ENCODE measurements at regions of chr6 and their contacts with region 1.

Region 1: GRCh38 chr6:87139236-87139635 is 16.1 kb upstream of the ZNF292 start:
- DNase-seq: peak; percentile 65
- H3K4me3 Mint-ChIP-seq: no peak overlapping the region
- H3K27ac Mint-ChIP-seq: no peak overlapping the region
- H3K4me1 Mint-ChIP-seq: peaks cover 6% of the 10 kb centered on the region
- H3K27me3 Mint-ChIP-seq: peaks cover 55% of the 10 kb centered on the region
- CTCF ChIP-seq: peak; percentile 72

Region 2: GRCh38 chr6:86619428-86619827 is 519.8 kb before region 1 on chr6:
- CTCF ChIA-PET with region 1: no interaction called
- POLR2A ChIA-PET with region 1: no interaction called
- intact Hi-C with region 1: no loop called
- DNase-seq: no peak
- H3K4me3 Mint-ChIP-seq: no peak overlapping the region
- H3K27ac Mint-ChIP-seq: no peak overlapping the region
- H3K4me1 Mint-ChIP-seq: no peaks in the 10 kb centered on the region
- H3K27me3 Mint-ChIP-seq: no peaks in the 10 kb centered on the region
- CTCF ChIP-seq: no peak

Region 3: GRCh38 chr6:86871681-86872080 is 267.6 kb before region 1 on chr6:
- CTCF ChIA-PET with region 1: no interaction called
- POLR2A ChIA-PET with region 1: no interaction called
- intact Hi-C with region 1: no loop called
- DNase-seq: no peak
- H3K4me3 Mint-ChIP-seq: no peak overlapping the region
- H3K27ac Mint-ChIP-seq: no peak overlapping the region
- H3K4me1 Mint-ChIP-seq: no peaks in the 10 kb centered on the region
- H3K27me3 Mint-ChIP-seq: no peaks in the 10 kb centered on the region
- CTCF ChIP-seq: no peak

Region 4: DNA sequence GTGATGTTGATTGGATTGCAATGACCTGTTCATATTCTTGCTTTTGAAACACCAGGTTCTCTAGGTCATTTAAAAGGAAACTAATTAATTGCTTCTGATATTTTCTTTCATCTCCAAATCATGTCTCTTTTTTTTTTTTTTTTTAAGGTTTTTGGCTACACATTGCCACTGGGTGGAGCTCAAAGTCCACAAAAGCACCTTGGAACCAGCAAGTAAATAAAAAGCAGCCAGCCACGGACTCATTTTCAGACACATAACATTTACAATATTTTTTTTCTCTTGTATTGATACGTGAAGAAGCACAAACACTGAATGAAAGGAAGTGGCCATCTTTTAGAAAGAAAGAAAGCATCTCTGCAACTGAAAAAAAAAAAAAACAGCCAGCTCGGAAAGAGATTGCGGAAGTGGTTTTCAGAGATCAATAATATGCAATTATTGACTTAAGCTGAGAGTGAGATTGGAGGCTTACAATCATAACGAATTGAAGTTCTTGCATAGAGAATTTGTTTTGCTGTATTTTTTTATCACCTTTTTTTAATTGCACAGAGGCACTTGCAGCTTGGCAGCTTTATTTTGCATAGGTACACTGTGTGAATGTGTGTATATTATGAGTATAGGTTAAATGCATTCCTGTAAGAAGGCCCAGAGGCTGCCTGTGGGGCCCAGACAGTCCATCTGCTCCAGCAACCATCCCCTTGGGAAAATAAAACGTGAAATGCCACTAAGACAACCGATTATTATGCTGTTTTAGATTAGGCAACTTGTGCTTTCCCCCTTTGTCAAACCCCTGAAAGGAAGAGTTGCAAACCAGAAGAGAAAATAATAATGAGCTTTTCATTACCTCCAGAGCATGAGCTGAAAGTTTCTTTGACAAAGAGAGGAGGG is 72.5 kb before region 1 on chr6:
- CTCF ChIA-PET with region 1: interaction called, 13 read pairs
- POLR2A ChIA-PET with region 1: no interaction called
- intact Hi-C with region 1: loop called (anchors 5 kb)
- DNase-seq: peak; percentile 62
- H3K4me3 Mint-ChIP-seq: peak overlapping the region; percentile 60
- H3K27ac Mint-ChIP-seq: no peak overlapping the region
- H3K4me1 Mint-ChIP-seq: peaks cover 10% of the 10 kb centered on the region
- H3K27me3 Mint-ChIP-seq: peaks cover 41% of the 10 kb centered on the region
- CTCF ChIP-seq: peak; percentile 72

Region 5: DNA sequence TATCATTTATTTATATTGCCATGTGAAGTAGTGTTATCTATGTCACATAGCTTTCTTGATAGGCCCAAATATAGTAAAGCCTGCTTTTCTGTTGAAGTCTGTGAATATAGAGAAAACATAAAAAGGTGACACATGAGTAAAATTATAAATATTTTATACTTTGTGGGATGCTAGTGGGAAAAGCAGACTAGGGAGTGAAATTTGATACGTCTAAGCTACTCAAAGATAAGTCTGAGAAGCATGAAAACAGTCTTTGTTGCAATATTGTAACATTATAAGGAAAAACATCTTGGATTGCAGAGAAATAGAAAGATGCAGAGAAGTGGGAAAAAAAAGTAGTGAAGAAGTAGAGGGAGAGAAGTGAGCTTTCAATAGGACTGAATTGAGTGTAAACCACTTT is 91.6 kb after region 1 on chr6:
- CTCF ChIA-PET with region 1: interaction called, 34 read pairs
- POLR2A ChIA-PET with region 1: no interaction called
- intact Hi-C with region 1: no loop called
- DNase-seq: no peak
- H3K4me3 Mint-ChIP-seq: no peak overlapping the region
- H3K27ac Mint-ChIP-seq: peak overlapping the region; percentile 25
- H3K4me1 Mint-ChIP-seq: no peaks in the 10 kb centered on the region
- H3K27me3 Mint-ChIP-seq: no peaks in the 10 kb centered on the region
- CTCF ChIP-seq: no peak

Region 6: GRCh38 chr6:87341899-87342298 is 202.7 kb after region 1 on chr6:
- CTCF ChIA-PET with region 1: no interaction called
- POLR2A ChIA-PET with region 1: no interaction called
- intact Hi-C with region 1: no loop called
- DNase-seq: no peak
- H3K4me3 Mint-ChIP-seq: no peak overlapping the region
- H3K27ac Mint-ChIP-seq: no peak overlapping the region
- H3K4me1 Mint-ChIP-seq: no peaks in the 10 kb centered on the region
- H3K27me3 Mint-ChIP-seq: no peaks in the 10 kb centered on the region
- CTCF ChIP-seq: no peak

Region 7: GRCh38 chr6:87393022-87393622 is 253.9 kb after region 1 on chr6:
- CTCF ChIA-PET with region 1: interaction called, 6 read pairs
- POLR2A ChIA-PET with region 1: interaction called, 3 read pairs
- intact Hi-C with region 1: loop called (anchors 1 kb)
- DNase-seq: peak; percentile 58
- H3K4me3 Mint-ChIP-seq: no peak overlapping the region
- H3K27ac Mint-ChIP-seq: no peak overlapping the region
- H3K4me1 Mint-ChIP-seq: no peaks in the 10 kb centered on the region
- H3K27me3 Mint-ChIP-seq: no peaks in the 10 kb centered on the region
- CTCF ChIP-seq: peak; percentile 71

Region 8: GRCh38 chr6:87723170-87724078 is 584.2 kb after region 1 on chr6:
- CTCF ChIA-PET with region 1: interaction called, 10 read pairs
- POLR2A ChIA-PET with region 1: no interaction called
- intact Hi-C with region 1: no loop called
- DNase-seq: peak; percentile 98
- H3K4me3 Mint-ChIP-seq: peak overlapping the region; percentile 15
- H3K27ac Mint-ChIP-seq: no peak overlapping the region
- H3K4me1 Mint-ChIP-seq: peaks cover 21% of the 10 kb centered on the region
- H3K27me3 Mint-ChIP-seq: no peaks in the 10 kb centered on the region
- CTCF ChIP-seq: no peak

Measured in MCF 10A (cell line).